ENCODE measurements at regions of chr1 and their contacts with region 1.

Region 1: DNA sequence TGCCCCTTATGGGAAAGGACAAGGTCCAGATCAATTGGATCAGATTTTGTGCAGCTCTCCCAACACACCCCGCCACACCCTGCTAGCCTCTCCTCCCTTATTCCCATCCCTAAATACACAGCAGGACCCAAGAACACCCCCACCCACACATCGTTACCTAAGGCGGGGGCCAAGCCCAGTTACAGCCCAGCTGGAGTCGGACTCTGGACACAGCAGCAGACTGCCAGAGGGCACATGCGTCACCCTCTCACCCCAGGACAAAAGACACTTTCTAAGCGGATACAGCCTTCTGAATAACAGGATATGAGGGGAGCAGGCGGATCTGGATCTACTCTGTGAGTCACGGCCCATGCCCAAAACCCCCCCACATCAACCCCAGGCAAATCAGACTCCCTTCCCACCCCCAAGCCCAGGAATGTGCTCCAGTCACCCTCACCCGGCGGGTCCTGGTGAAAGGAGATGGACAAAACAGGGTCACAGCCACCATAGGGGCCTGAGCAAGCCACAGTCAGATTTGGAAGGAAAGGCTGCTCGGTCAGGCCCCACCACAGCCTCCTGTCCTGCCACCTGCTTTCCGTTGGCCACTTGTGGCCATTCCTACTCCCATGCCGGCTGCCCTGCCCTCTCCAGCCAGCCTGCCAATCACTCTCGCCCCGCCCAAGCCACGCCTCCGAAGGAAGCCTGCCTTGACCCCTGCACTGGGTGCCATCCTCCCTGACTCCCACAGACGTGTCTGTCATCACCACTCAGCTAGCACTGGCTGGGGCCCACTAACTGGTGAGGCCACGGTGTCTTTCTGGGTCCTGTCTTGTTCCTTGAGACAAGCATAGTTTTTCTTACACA is 4.0 kb downstream of the S100A16 start:
- DNase-seq: peak; percentile 98
- H3K4me3 ChIP-seq: peak overlapping the region; percentile 37 to 70 (median 53)
- H3K27ac ChIP-seq: peak overlapping the region; percentile 83
- H3K4me1 ChIP-seq: peaks cover 34% of the 10 kb centered on the region
- H3K27me3 ChIP-seq: no peaks in the 10 kb centered on the region
- CTCF ChIP-seq: no peak

Region 2: DNA sequence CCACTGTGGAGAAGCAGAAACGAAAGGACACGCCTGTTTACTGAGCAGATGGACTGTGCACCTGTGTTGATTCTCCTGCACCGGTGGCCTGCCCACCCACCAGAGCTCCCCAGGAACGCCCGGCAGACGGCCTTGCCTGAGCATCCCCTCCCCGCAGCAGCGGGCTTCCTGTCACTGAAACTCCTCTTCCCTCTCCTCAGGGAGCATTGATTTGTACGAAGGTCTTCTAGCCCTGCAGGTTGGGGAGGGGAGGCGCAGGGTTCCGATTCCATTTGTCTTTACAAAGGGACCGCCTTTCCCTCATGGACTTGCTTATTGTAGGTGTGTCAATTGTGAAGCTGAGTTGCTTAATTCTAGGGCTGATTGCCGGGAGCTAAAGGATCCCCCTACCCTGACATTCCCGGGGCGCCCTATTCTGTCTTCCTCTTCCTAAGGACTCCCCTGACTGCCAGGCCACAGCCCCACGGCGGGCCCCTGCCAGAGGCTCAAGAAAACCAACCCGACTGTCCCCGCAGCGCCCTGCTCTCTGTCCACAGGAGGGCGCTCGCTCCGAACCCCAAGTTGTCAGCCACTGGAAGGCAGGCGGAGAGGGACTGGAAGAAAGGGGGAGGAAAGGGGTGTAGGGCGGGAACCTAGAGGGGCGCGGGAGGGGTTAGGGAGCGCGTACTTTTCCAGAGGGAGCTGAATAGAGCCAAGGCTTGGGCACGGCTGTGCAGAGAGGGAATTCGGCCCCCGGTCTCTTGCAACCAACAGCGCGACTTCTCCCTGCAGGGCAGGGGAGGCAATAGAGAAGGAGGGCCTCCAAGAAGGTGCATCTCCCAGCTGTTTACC is 76.0 kb before region 1 on chr1:
- CTCF ChIA-PET with region 1: no interaction called
- dilution Hi-C with region 1: no loop called
- in situ Hi-C with region 1: no loop called
- intact Hi-C with region 1: loop called (anchors 2 kb)
- DNase-seq: peak; percentile 76
- H3K4me3 ChIP-seq: peak overlapping the region in 2 of 3 experiments; percentile 18 to 73
- H3K27ac ChIP-seq: peak overlapping the region; percentile 73
- H3K4me1 ChIP-seq: peaks cover 44% of the 10 kb centered on the region
- H3K27me3 ChIP-seq: no peaks in the 10 kb centered on the region
- CTCF ChIP-seq: peak; percentile 56 to 78

Region 3: GRCh38 chr1:153566440-153567379 is 42.3 kb before region 1 on chr1:
- CTCF ChIA-PET with region 1: interaction called, 6 read pairs
- dilution Hi-C with region 1: no loop called
- in situ Hi-C with region 1: no loop called
- intact Hi-C with region 1: loop called (anchors 1 kb)
- DNase-seq: peak; percentile 99
- H3K4me3 ChIP-seq: peak overlapping the region in 2 of 3 experiments; percentile 61 to 98
- H3K27ac ChIP-seq: peak overlapping the region; percentile 100
- H3K4me1 ChIP-seq: peaks cover 40% of the 10 kb centered on the region
- H3K27me3 ChIP-seq: no peaks in the 10 kb centered on the region
- CTCF ChIP-seq: no peak

Region 4: GRCh38 chr1:153626922-153627796 is 18.2 kb after region 1 on chr1 and contains the start of gene S100A13:
- CTCF ChIA-PET with region 1: interaction called, 14 read pairs
- dilution Hi-C with region 1: no loop called
- in situ Hi-C with region 1: no loop called
- intact Hi-C with region 1: loop called (anchors 1 kb)
- DNase-seq: peak; percentile 93
- H3K4me3 ChIP-seq: peak within 1 kb of the TSS; percentile 57 to 69 (median 64)
- H3K27ac ChIP-seq: peak within 1 kb of the TSS; percentile 79
- H3K4me1 ChIP-seq: peaks cover 22% of the 10 kb centered on the region
- H3K27me3 ChIP-seq: no peaks in the 10 kb centered on the region
- CTCF ChIP-seq: peak; percentile 65 to 76
- total RNA-seq, gene S100A13: 72.0 to 213 TPM

Region 5: GRCh38 chr1:153633716-153634665 is 25.0 kb after region 1 on chr1 and contains the start of gene CHTOP:
- CTCF ChIA-PET with region 1: no interaction called
- dilution Hi-C with region 1: no loop called
- in situ Hi-C with region 1: no loop called
- intact Hi-C with region 1: loop called (anchors 1 kb)
- DNase-seq: peak; percentile 96
- H3K4me3 ChIP-seq: peak within 1 kb of the TSS; percentile 74 to 100 (median 90)
- H3K27ac ChIP-seq: peak within 1 kb of the TSS; percentile 97
- H3K4me1 ChIP-seq: peaks cover 9% of the 10 kb centered on the region
- H3K27me3 ChIP-seq: no peaks in the 10 kb centered on the region
- CTCF ChIP-seq: no peak
- total RNA-seq, gene CHTOP: 36.0 to 64.5 TPM

Region 6: DNA sequence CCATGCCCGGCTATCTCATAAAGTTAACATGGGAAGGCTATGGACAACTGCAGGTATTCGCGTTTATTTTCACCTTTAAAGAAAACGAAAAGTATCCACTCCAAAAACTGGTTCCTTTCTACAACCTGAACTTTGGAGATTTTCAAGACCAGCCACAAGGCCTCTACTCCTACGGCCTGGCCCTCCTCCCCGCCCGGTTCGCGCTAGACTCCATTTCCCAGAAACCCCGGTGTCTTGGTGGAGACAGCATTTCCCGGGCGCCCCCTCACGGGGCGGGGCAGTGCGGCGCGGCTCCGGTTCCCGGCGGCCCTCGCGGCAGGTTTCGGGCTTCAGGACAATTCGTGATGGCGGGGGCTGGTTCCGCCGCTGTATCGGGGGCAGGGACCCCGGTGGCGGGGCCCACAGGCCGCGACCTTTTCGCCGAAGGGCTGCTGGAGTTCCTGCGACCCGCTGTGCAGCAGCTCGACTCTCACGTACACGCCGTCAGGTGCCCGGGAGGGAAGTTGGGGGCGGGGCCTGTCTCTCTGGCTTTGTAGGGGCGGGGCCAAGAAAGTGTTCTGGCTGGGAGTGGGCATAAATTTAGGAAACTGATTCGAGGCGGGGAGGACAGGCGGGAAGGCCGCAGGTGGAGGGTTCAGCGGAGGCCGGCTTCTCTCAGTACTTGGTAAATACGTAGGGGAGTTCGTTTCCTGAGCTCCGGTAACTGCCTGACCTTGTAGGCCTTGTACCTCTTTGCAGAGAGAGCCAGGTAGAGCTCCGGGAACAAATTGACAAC is 49.6 kb after region 1 on chr1 and contains the start of gene SNAPIN:
- CTCF ChIA-PET with region 1: no interaction called
- dilution Hi-C with region 1: no loop called
- in situ Hi-C with region 1: no loop called
- intact Hi-C with region 1: loop called (anchors 1 kb)
- DNase-seq: peak; percentile 83
- H3K4me3 ChIP-seq: peak within 1 kb of the TSS; percentile 70 to 93 (median 75)
- H3K27ac ChIP-seq: peak within 1 kb of the TSS; percentile 82
- H3K4me1 ChIP-seq: peaks cover 13% of the 10 kb centered on the region
- H3K27me3 ChIP-seq: no peaks in the 10 kb centered on the region
- CTCF ChIP-seq: peak in 1 of 2 donors; percentile 29
- total RNA-seq, gene SNAPIN: 33.1 to 39.8 TPM